Head of caudate nucleus (tissue), 42 donors: ENCODE measurements at regions of chr6 and their contacts with region 1.

Region 1: DNA sequence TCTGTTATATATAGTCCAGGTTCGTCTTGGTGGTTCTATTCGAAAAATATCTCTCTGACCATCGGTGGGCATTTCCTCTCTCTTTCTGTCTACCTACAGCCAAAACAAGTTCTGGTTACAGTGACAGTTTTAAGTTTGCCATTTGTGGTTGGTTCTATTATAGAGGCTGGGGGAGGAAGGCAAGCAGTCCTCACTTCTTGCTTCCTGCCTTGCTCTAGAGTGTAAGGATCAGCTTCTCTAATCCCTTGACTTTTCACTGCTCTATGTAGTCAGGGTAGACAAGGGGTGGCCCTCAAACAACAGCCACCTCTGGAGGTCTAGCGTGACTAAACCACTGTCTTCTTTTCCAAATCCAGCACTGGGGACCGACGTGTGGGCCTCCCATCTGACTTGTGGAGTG is 16.1 kb downstream of the E2F3 start:
- DNase-seq: no peak

Region 2: GRCh38 chr6:20286968-20287565 is 130.8 kb before region 1 on chr6:
- intact Hi-C with region 1: no loop called
- DNase-seq: no peak

Region 3: GRCh38 chr6:20511852-20512251 is 94.0 kb after region 1 on chr6:
- intact Hi-C with region 1: loop called (anchors 10 kb)
- DNase-seq: no peak

Region 4: GRCh38 chr6:20630617-20631548 is 213.1 kb after region 1 on chr6:
- intact Hi-C with region 1: no loop called
- DNase-seq: no peak